Endothelial cell of umbilical vein (primary cell): ENCODE measurements at regions of chr4 and their contacts with region 1.

Region 1: DNA sequence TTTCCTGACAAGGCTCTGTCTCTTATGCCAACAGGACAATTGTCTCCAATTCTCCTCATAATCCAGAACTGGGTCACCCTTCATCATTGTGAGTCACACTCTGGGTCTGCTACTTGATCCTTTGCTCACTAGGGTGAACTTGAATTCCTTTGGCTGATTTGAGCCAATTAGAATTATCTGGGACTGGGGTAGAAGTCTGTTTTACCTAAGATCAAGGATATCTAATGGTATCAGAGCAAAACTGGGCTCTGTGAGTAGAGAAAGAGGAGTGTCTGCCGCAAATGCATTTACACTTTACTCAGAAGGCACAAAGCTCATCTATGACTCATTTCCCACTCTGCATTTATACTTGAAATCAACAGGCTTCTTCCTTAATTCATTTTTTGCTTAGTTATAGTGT is 72.6 kb downstream of the PITX2 start:
- DNase-seq: peak; percentile 66
- H3K4me3 ChIP-seq: no peak overlapping the region
- H3K27ac ChIP-seq: peak overlapping the region; percentile 63
- H3K4me1 ChIP-seq: peaks cover 13% of the 10 kb centered on the region
- H3K27me3 ChIP-seq: no peaks in the 10 kb centered on the region
- CTCF ChIP-seq: no peak
- POLR2A ChIP-seq: no peak

Region 2: DNA sequence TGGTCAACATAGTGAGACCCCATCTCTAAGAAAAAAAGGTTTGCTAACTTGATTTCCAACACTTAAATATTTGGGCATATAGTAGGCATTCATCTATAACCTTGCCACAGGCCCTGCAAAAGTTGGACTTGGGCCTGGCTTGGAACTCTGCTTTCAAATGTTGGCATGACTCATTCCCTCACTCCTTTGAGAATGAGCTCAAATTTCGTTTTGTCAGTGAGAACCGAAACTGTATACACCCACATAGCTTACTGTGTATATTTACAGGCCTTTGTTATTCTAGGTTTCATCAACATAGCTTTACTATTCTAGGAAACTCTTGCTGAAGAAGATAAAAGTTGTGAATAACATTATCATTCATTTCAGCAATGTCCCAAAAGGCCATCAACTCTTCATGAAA is 263.1 kb before region 1 on chr4:
- CTCF ChIA-PET with region 1: no interaction called
- POLR2A ChIA-PET with region 1: no interaction called
- dilution Hi-C with region 1: no loop called
- intact Hi-C with region 1: no loop called
- DNase-seq: no peak
- H3K4me3 ChIP-seq: no peak overlapping the region
- H3K27ac ChIP-seq: no peak overlapping the region
- H3K4me1 ChIP-seq: no peaks in the 10 kb centered on the region
- H3K27me3 ChIP-seq: no peaks in the 10 kb centered on the region
- CTCF ChIP-seq: no peak
- POLR2A ChIP-seq: no peak

Region 3: GRCh38 chr4:110533940-110534339 is 16.3 kb before region 1 on chr4:
- CTCF ChIA-PET with region 1: interaction called, 7 read pairs
- POLR2A ChIA-PET with region 1: no interaction called
- dilution Hi-C with region 1: no loop called
- intact Hi-C with region 1: loop called (anchors 1 kb)
- DNase-seq: peak; percentile 94
- H3K4me3 ChIP-seq: peak overlapping the region in 1 of 3 experiments; percentile 54
- H3K27ac ChIP-seq: peak overlapping the region; percentile 94
- H3K4me1 ChIP-seq: peaks cover 38% of the 10 kb centered on the region
- H3K27me3 ChIP-seq: no peaks in the 10 kb centered on the region
- CTCF ChIP-seq: no peak
- POLR2A ChIP-seq: no peak